ENCODE measurements at regions of chr1 and their contacts with region 1.

Region 1: DNA sequence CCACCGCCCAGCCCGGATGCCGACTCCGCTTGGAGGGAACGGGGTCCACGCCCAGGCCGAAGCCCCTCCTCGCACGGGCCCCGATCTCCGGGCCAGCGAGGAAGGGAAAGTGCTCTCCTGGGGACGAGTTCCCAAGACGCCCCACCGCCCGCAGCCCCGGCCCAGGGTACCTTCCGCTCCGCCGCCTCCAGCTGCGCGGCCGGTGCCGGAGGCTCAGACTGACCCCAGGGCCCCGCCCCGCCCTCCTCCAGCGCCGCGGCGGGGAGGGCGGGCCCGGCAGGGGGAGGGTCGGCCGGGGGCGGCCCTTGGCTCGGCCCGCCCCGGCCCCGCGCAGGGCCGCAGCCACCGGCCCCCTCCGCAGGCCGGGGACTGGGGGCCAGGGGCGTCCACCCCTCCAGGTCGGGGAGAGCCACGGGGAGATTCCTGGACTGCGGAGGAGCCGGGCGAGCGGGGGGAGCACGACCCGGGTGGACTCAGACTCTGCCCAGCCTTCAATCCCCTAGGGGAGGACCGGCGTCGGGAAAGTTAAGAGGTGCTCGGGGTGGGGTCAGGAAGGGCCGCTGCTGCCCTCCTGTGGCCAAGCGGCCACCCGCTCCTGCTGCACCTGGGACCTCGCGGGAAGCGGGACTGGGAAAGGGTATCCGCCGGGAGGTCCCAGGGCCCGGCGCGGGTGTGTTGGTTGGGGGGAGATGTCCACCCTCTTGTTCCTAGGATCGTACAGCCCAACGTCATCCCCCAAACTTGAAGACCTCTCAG is at the start of gene RHOC:
- DNase-seq: peak; percentile 85
- ATAC-seq: peak; percentile 81
- H3K4me3 ChIP-seq: peak within 1 kb of the TSS; percentile 84
- H3K27ac ChIP-seq: peak within 1 kb of the TSS; percentile 81
- H3K4me1 ChIP-seq: peaks cover 13% of the 10 kb centered on the region
- H3K27me3 ChIP-seq: no peaks in the 10 kb centered on the region; the same call in 1 of the 2 replicates
- CTCF ChIP-seq: peak; percentile 93
- POLR2A ChIP-seq: peak; percentile 74
- RAD21 ChIP-seq: peak; percentile 85
- total RNA-seq, gene RHOC: 699 and 764 TPM in 2 replicates

Region 2: GRCh38 chr1:112466078-112466660 is 240.9 kb before region 1 on chr1:
- CTCF ChIA-PET with region 1: no interaction called
- POLR2A ChIA-PET with region 1: no interaction called
- dilution Hi-C with region 1: no loop called
- in situ Hi-C with region 1: no loop called
- intact Hi-C with region 1: loop called (anchors 10 kb)
- DNase-seq: peak; percentile 94
- ATAC-seq: peak; percentile 85
- H3K4me3 ChIP-seq: peak overlapping the region; percentile 26
- H3K27ac ChIP-seq: peak overlapping the region; percentile 41
- H3K4me1 ChIP-seq: peaks cover 13% of the 10 kb centered on the region
- H3K27me3 ChIP-seq: no peaks in the 10 kb centered on the region
- CTCF ChIP-seq: peak; percentile 87
- POLR2A ChIP-seq: 0 out of 2 replicates have a peak, but pooled peaks have one; percentile 12
- RAD21 ChIP-seq: peak; percentile 81

Region 3: DNA sequence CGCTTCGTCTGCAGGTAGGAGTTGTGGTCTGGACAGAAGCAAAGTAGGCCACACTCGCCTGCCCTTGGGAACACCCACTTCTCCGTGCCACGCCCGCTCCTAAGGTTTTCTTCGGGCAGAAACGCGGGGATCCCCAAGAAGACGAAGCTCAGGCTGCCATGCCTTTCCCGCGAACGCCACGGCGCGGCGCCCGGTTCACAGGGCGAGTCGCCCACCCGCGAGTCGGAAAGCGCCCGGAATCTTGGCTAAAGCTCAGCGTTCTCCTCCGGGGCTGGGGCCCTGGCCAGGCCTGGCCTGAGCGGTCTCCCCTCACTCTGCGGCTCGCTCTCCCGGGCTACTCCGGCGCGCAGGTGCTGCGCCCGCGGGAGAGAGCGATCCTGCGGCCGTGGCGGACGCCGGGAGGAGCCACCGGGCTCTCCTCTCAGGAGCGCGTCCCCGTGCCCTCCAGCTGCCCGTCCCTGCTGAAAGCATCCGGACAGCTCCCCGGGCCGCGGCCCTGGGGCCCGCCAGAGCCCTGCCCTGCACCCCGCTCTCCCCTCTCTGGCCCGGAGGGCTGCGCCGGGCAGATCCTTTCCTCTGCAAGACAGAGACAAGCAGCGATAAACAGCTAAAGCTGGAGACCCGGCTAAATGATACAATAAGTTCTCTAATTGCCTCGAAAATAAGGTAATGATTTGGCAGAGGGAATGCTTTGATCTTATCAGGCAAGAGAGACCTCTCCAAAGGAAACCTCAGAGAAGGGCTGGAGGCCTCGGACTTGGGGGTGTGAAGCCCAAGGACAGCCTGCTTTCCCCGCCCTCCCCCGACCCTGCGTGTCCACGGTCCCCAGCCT is 205.1 kb before region 1 on chr1:
- CTCF ChIA-PET with region 1: no interaction called
- POLR2A ChIA-PET with region 1: no interaction called
- dilution Hi-C with region 1: no loop called
- in situ Hi-C with region 1: loop called (anchors 10 kb)
- intact Hi-C with region 1: loop called (anchors 2 kb)
- DNase-seq: peak; percentile 54
- ATAC-seq: peak; percentile 89
- H3K4me3 ChIP-seq: peak overlapping the region; percentile 40
- H3K27ac ChIP-seq: no peak overlapping the region; the same call in 1 of the 2 replicates
- H3K4me1 ChIP-seq: peaks cover 6% of the 10 kb centered on the region; the same call in 1 of the 2 replicates
- H3K27me3 ChIP-seq: peaks cover 27% of the 10 kb centered on the region
- CTCF ChIP-seq: peak; percentile 73
- POLR2A ChIP-seq: no peak
- RAD21 ChIP-seq: peak; percentile 77

Region 4: GRCh38 chr1:112515311-112516009 is 191.6 kb before region 1 on chr1:
- CTCF ChIA-PET with region 1: no interaction called
- POLR2A ChIA-PET with region 1: no interaction called
- dilution Hi-C with region 1: no loop called
- in situ Hi-C with region 1: no loop called
- intact Hi-C with region 1: loop called (anchors 5 kb)
- DNase-seq: peak; percentile 83
- ATAC-seq: peak; percentile 69
- H3K4me3 ChIP-seq: no peak overlapping the region
- H3K27ac ChIP-seq: peak overlapping the region; percentile 87; the same call in 1 of the 2 replicates
- H3K4me1 ChIP-seq: peaks cover 31% of the 10 kb centered on the region
- H3K27me3 ChIP-seq: peaks cover 6% of the 10 kb centered on the region
- CTCF ChIP-seq: no peak
- POLR2A ChIP-seq: no peak
- RAD21 ChIP-seq: no peak

Region 5: DNA sequence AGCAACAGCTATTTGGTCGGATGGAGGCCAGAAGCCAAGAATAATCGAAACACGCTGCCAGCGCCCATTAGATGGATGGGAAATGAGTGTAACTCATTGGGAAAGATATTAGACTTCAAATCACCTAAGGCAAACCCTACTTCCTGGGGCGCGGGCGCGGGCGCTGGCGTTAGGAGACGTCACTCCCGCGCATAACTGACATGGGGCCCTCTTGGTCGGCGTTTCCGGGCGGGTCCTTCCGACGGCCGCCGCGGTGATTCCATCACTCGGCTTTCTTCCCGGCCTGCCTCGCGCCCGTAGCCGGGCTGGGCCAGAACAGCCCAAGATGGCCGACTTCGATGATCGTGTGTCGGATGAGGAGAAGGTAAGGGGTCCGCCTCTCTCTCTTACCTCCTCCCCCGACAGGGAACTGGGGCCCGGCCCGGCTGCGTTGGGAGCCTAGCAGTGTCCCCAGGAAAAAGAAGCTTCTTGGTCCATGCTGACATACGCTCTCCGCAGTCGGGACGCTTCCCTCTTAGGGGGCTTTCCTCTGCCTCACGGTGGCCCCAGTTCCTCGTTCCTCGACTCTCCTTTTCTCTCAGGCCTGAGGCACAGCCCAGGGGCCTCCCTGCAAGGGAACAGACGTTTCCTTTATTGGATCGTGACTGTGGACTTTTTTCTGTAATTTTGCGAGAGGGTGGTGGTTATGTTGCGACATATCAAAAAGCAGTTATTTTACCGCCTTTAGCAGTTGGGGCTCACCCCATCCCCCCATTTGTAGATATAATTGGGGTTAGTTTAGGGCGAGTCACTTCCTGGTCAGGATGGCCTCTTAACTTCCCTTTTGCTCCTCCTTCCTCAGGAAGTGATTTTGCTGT is 87.3 kb before region 1 on chr1 and contains the start of gene CAPZA1:
- CTCF ChIA-PET with region 1: interaction called, 4 read pairs
- POLR2A ChIA-PET with region 1: no interaction called
- dilution Hi-C with region 1: no loop called
- in situ Hi-C with region 1: no loop called
- intact Hi-C with region 1: loop called (anchors 1 kb)
- DNase-seq: peak; percentile 90
- ATAC-seq: peak; percentile 93
- H3K4me3 ChIP-seq: peak within 1 kb of the TSS; percentile 86
- H3K27ac ChIP-seq: peak within 1 kb of the TSS; percentile 99
- H3K4me1 ChIP-seq: no peaks in the 10 kb centered on the region
- H3K27me3 ChIP-seq: no peaks in the 10 kb centered on the region
- CTCF ChIP-seq: no peak
- POLR2A ChIP-seq: peak; percentile 93
- RAD21 ChIP-seq: no peak
- total RNA-seq, gene CAPZA1: 262 and 440 TPM in 2 replicates

Region 6: GRCh38 chr1:112778137-112778536 is 71.1 kb after region 1 on chr1:
- CTCF ChIA-PET with region 1: no interaction called
- POLR2A ChIA-PET with region 1: no interaction called
- dilution Hi-C with region 1: no loop called
- in situ Hi-C with region 1: no loop called
- intact Hi-C with region 1: no loop called
- DNase-seq: no peak
- ATAC-seq: no peak
- H3K4me3 ChIP-seq: no peak overlapping the region
- H3K27ac ChIP-seq: no peak overlapping the region
- H3K4me1 ChIP-seq: no peaks in the 10 kb centered on the region
- H3K27me3 ChIP-seq: peaks cover 17% of the 10 kb centered on the region
- CTCF ChIP-seq: no peak
- POLR2A ChIP-seq: no peak
- RAD21 ChIP-seq: no peak

Measured in IMR-90 (cell line).